Ascending aorta (tissue), 2 donors: ENCODE measurements at regions of chr11 and their contacts with region 1.

Region 1: GRCh38 chr11:120335908-120336640 is at the start of gene ARHGEF12:
- DNase-seq: peak; percentile 76 to 97
- H3K4me3 ChIP-seq: peak within 1 kb of the TSS; percentile 88 to 91
- H3K27ac ChIP-seq: peak within 1 kb of the TSS; percentile 99 to 100
- H3K4me1 ChIP-seq: peaks cover 16 to 41% of the 10 kb centered on the region in 2 donors
- H3K27me3 ChIP-seq: no peaks in the 10 kb centered on the region
- CTCF ChIP-seq: peak; percentile 14 to 35 (median 25)
- total RNA-seq, gene ARHGEF12: 65.9 TPM

Region 2: GRCh38 chr11:120324932-120325810 is 10.9 kb before region 1 on chr11 and contains the start of gene TLCD5:
- intact Hi-C with region 1: loop called (anchors 1 kb)
- DNase-seq: peak in 1 of 2 donors; percentile 83
- H3K4me3 ChIP-seq: peak within 1 kb of the TSS; percentile 65 to 66
- H3K27ac ChIP-seq: peak within 1 kb of the TSS; percentile 85 to 94
- H3K4me1 ChIP-seq: peaks cover 0 to 12% of the 10 kb centered on the region in 2 donors
- H3K27me3 ChIP-seq: no peaks in the 10 kb centered on the region
- CTCF ChIP-seq: peak; percentile 10 to 31 (median 17)
- total RNA-seq, gene TLCD5: 8.4 TPM

Region 3: DNA sequence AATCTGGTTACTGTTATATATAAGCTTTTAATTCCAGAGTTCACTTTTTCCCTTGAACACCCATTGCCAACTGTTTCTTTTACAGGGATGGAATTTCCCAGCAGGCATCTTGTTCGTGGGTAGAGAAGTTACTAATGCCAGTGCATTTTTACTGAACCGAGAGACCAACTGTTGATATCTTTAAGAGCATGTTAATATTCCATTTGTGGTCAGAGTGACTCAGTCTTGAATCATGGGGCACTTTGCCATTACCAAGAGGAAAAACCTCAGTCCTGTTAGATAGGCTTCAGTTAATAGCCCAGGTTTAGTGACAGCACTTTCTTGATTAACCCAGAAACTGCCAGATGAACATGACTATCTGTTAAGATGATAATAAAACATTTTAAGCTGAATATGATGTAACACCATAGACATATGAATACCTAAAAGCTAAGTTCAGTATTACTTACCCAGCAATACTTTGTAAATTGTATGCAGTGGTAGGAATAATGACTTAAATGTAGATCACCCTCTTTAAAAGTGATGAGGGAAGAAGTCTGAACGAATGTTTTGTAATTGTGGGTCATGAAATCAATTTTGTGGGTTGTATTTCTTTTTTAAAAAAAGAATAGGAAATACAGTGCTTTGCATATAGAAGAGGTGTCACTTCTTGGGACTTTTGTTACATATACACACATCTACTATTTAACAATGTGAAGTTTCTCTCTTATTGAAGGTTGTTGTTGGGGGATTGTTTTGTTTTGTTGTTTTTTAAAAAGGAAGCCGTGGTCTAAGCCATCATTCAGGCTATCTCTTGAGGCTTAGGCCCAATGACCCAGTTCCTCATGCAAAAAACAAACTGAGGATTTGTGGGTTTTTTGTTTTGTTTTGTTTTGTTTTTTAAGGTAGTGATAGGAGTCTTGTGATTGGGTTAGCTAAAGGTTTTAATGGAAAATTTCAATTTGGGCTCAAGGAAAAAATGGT is 96.3 kb after region 1 on chr11:
- intact Hi-C with region 1: loop called (anchors 2 kb)
- DNase-seq: peak; percentile 12 to 85
- H3K4me3 ChIP-seq: peak overlapping the region in 1 of 2 donors; percentile 2
- H3K27ac ChIP-seq: peak overlapping the region; percentile 78 to 89
- H3K4me1 ChIP-seq: peaks cover 0 to 9% of the 10 kb centered on the region in 2 donors
- H3K27me3 ChIP-seq: no peaks in the 10 kb centered on the region
- CTCF ChIP-seq: no peak